Activated CD4-positive, alpha-beta T cell treated with anti-CD3 and anti-CD28 coated beads for 36 hours (primary cell): ENCODE measurements at regions of chr13 and their contacts with region 1.

Region 1: DNA sequence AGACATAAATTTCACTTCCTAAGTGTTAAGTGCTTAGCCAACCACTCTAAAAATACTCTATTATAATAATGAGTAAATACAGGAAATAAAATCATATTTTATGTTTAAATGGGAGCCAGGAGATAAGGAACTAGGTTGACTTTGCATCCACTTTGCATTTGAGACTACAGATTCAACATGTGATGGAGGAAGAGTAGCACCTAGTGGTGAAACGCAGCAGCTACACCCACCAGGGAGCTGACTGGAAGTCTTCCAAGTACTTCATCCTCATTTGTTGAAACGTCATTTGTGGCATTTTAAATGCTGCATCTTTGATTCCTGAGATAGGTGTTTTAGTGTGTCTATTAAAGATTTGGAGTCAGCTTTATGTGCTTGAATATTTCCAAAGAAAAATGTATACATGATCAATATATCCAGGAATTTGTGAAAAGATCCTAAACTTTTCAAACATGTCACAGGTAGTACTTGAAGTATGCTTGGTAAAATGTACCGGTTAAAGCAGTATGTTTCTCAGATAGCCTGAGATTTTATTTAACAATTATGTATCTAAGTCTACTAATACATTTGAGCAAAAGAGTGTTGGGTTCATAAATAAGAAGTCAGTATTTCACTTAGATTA is 17.4 kb upstream of the KCTD12 start:
- DNase-seq: peak; percentile 79
- ATAC-seq: peak; percentile 80
- H3K4me3 Mint-ChIP-seq: no peak overlapping the region
- H3K27ac Mint-ChIP-seq: no peak overlapping the region
- H3K4me1 Mint-ChIP-seq: no peaks in the 10 kb centered on the region
- H3K27me3 Mint-ChIP-seq: peaks cover 10% of the 10 kb centered on the region

Region 2: DNA sequence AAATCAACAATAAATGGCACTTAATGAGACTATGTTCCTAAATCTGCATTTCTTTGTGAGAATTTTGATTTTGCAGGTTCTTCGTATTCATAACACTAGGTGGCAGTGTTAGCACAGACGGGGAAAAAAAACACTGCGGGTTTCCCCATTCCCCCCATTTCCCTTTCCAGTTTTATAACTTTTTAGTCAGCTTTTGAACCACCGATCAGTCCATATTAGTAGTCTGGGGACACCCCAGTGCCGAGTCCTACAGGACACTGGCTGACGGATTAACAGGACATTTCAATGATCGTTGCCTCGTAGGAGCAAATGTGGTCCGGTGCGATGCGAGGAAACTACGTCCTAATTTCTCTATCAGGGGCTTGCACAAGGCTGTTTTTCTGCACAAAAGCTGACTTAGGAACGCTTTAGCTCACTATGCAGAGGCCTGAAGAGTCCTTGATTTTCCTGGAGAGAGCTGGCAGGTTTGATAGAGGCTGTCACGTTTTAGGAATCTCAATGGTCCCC is 1033.2 kb before region 1 on chr13:
- CTCF ChIA-PET with region 1: interaction called, 23 read pairs
- POLR2A ChIA-PET with region 1: no interaction called
- intact Hi-C with region 1: no loop called
- DNase-seq: peak; percentile 10
- ATAC-seq: peak; percentile 27
- H3K4me3 Mint-ChIP-seq: no peak overlapping the region
- H3K27ac Mint-ChIP-seq: peak overlapping the region; percentile 58
- H3K4me1 Mint-ChIP-seq: peaks cover 19% of the 10 kb centered on the region
- H3K27me3 Mint-ChIP-seq: peaks cover 8% of the 10 kb centered on the region

Region 3: GRCh38 chr13:76473552-76474134 is 430.0 kb before region 1 on chr13:
- CTCF ChIA-PET with region 1: interaction called, 3 read pairs
- POLR2A ChIA-PET with region 1: no interaction called
- intact Hi-C with region 1: loop called (anchors 2 to 10 kb)
- DNase-seq: peak; percentile 84
- ATAC-seq: peak; percentile 93
- H3K4me3 Mint-ChIP-seq: no peak overlapping the region
- H3K27ac Mint-ChIP-seq: no peak overlapping the region
- H3K4me1 Mint-ChIP-seq: no peaks in the 10 kb centered on the region
- H3K27me3 Mint-ChIP-seq: peaks cover 4% of the 10 kb centered on the region

Region 4: GRCh38 chr13:76822698-76823267 is 80.9 kb before region 1 on chr13:
- CTCF ChIA-PET with region 1: interaction called, 13 read pairs
- POLR2A ChIA-PET with region 1: no interaction called
- intact Hi-C with region 1: loop called (anchors 1 kb)
- DNase-seq: peak; percentile 10
- ATAC-seq: peak; percentile 88
- H3K4me3 Mint-ChIP-seq: no peak overlapping the region
- H3K27ac Mint-ChIP-seq: no peak overlapping the region
- H3K4me1 Mint-ChIP-seq: no peaks in the 10 kb centered on the region
- H3K27me3 Mint-ChIP-seq: peaks cover 2% of the 10 kb centered on the region